ENCODE measurements at regions of chr12 and their contacts with region 1.

Region 1: DNA sequence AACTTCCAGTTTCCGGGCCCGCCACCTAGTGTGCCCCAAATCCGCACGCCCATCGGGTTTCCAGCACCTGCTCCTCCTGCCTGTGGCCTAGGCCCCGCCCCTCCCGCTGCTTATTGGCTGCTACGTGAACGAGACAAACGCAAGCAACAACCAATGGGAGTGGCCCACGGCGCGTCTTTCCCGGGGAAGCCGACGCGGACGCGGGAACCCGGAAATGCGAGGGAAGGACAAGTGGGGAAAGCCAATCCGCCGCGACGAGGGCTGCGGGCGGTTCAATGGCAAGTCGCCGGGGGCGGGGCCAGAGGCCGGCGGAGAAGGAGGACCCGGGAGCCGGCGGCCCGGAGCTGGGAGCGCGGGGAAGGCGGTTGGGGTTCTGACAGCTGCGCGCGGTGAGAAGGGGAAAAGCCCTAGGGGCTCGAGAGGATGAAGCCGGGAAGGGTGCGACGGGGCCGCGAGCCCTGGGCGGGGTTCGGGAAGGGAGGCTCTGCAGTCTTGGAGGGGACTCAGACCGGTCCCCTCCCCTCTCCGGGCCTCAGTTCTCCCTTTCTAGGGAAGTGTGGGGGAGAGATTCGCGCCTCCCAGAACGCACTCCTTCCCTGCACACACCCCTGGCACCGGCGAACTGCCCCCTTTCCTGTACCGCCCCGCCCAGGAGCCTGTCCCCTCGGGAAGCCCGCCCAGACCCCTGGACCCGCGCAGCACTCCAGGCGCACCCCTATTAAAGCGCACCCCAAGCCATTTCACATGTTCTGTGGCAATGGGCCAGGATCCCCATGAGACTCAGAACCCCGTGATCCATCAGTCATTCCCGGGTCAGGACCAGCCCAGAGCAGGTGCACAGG is at the start of gene FICD:
- DNase-seq: peak; percentile 96 to 100 (median 99)
- ATAC-seq: peak; percentile 93
- H3K4me3 ChIP-seq: peak within 1 kb of the TSS; percentile 99
- H3K4me3 Mint-ChIP-seq: peak within 1 kb of the TSS; percentile 96
- H3K27ac ChIP-seq: peak within 1 kb of the TSS; percentile 70 to 71
- H3K27ac Mint-ChIP-seq: peak within 1 kb of the TSS; percentile 87
- H3K4me1 ChIP-seq: peaks cover 34% of the 10 kb centered on the region
- H3K4me1 Mint-ChIP-seq: peaks cover 29% of the 10 kb centered on the region
- H3K27me3 ChIP-seq: no peaks in the 10 kb centered on the region
- H3K27me3 Mint-ChIP-seq: no peaks in the 10 kb centered on the region
- CTCF ChIP-seq: no peak
- total RNA-seq, gene FICD: 2.7 to 3.2 TPM

Region 2: GRCh38 chr12:107093417-107094182 is 1421.6 kb before region 1 on chr12 and contains the start of gene CRY1:
- CTCF ChIA-PET with region 1: no interaction called
- POLR2A ChIA-PET with region 1: no interaction called
- intact Hi-C with region 1: loop called in 1 of 2 experiments (anchors 5 kb)
- DNase-seq: peak; percentile 86 to 96 (median 91)
- ATAC-seq: peak; percentile 75
- H3K4me3 ChIP-seq: peak within 1 kb of the TSS; percentile 90
- H3K4me3 Mint-ChIP-seq: no peak within 1 kb of the TSS
- H3K27ac ChIP-seq: peak within 1 kb of the TSS; percentile 99
- H3K27ac Mint-ChIP-seq: no peak within 1 kb of the TSS
- H3K4me1 ChIP-seq: peaks cover 31% of the 10 kb centered on the region
- H3K4me1 Mint-ChIP-seq: peaks cover 17% of the 10 kb centered on the region
- H3K27me3 ChIP-seq: no peaks in the 10 kb centered on the region
- H3K27me3 Mint-ChIP-seq: peaks cover 10% of the 10 kb centered on the region
- CTCF ChIP-seq: no peak
- total RNA-seq, gene CRY1: 70.7 to 77.4 TPM

Region 3: GRCh38 chr12:107760809-107761501 is 754.2 kb before region 1 on chr12 and contains the start of gene PRDM4:
- CTCF ChIA-PET with region 1: no interaction called
- POLR2A ChIA-PET with region 1: no interaction called
- intact Hi-C with region 1: loop called (anchors 2 to 5 kb)
- DNase-seq: peak; percentile 75 to 98 (median 88)
- ATAC-seq: peak; percentile 91
- H3K4me3 ChIP-seq: peak within 1 kb of the TSS; percentile 78
- H3K4me3 Mint-ChIP-seq: peak within 1 kb of the TSS; percentile 96
- H3K27ac ChIP-seq: peak within 1 kb of the TSS; percentile 51 to 77
- H3K27ac Mint-ChIP-seq: peak within 1 kb of the TSS; percentile 87
- H3K4me1 ChIP-seq: peaks cover 26% of the 10 kb centered on the region
- H3K4me1 Mint-ChIP-seq: peaks cover 48% of the 10 kb centered on the region
- H3K27me3 ChIP-seq: no peaks in the 10 kb centered on the region
- H3K27me3 Mint-ChIP-seq: no peaks in the 10 kb centered on the region
- CTCF ChIP-seq: no peak
- total RNA-seq, gene PRDM4: 40.2 to 44.0 TPM

Region 4: DNA sequence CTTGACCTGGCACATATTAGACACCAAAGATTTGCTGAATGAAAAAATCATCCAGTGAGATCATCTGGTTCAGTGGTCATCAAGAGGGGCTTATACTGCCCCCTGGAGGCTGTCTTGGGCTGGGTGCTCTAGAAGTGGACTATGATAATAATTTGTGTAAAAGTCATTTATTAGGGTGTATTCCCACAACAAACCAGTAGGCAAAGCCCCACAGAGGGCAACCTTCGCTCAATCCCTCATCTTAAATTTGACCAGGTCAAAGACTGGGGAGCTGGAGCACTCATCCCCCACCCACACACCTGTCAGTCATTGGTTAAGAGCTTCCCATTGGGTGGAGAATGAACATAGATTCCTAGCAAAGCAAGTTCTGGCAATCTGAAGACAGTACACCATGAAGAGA is 20.1 kb before region 1 on chr12:
- CTCF ChIA-PET with region 1: no interaction called
- POLR2A ChIA-PET with region 1: no interaction called
- intact Hi-C with region 1: no loop called
- DNase-seq: peak in 3 of 14 experiments; percentile 35 to 37 (median 37)
- ATAC-seq: no peak
- H3K4me3 ChIP-seq: no peak overlapping the region
- H3K4me3 Mint-ChIP-seq: no peak overlapping the region
- H3K27ac ChIP-seq: no peak overlapping the region
- H3K27ac Mint-ChIP-seq: no peak overlapping the region
- H3K4me1 ChIP-seq: no peaks in the 10 kb centered on the region
- H3K4me1 Mint-ChIP-seq: no peaks in the 10 kb centered on the region
- H3K27me3 ChIP-seq: peaks cover 15 to 22% of the 10 kb centered on the region in 2 experiments
- H3K27me3 Mint-ChIP-seq: peaks cover 56% of the 10 kb centered on the region
- CTCF ChIP-seq: no peak

Region 5: GRCh38 chr12:108562348-108563135 is 47.3 kb after region 1 on chr12 and contains the start of gene ISCU:
- CTCF ChIA-PET with region 1: interaction called, 4 read pairs
- POLR2A ChIA-PET with region 1: interaction called, 12 read pairs
- intact Hi-C with region 1: loop called (anchors 2 to 5 kb)
- DNase-seq: peak; percentile 97 to 100 (median 99)
- ATAC-seq: peak; percentile 63
- H3K4me3 ChIP-seq: peak within 1 kb of the TSS; percentile 97
- H3K4me3 Mint-ChIP-seq: peak within 1 kb of the TSS; percentile 99
- H3K27ac ChIP-seq: peak within 1 kb of the TSS; percentile 92 to 94
- H3K27ac Mint-ChIP-seq: peak within 1 kb of the TSS; percentile 96
- H3K4me1 ChIP-seq: peaks cover 63% of the 10 kb centered on the region
- H3K4me1 Mint-ChIP-seq: peaks cover 74% of the 10 kb centered on the region
- H3K27me3 ChIP-seq: no peaks in the 10 kb centered on the region
- H3K27me3 Mint-ChIP-seq: no peaks in the 10 kb centered on the region
- CTCF ChIP-seq: no peak
- total RNA-seq, gene ISCU: 269 to 270 TPM

Region 6: GRCh38 chr12:108856428-108857157 is 341.4 kb after region 1 on chr12:
- CTCF ChIA-PET with region 1: no interaction called
- POLR2A ChIA-PET with region 1: no interaction called
- intact Hi-C with region 1: loop called in 1 of 2 experiments (anchors 5 kb)
- DNase-seq: peak in 13 of 14 experiments; percentile 35 to 92 (median 58)
- ATAC-seq: peak; percentile 75
- H3K4me3 ChIP-seq: peak overlapping the region; percentile 72
- H3K4me3 Mint-ChIP-seq: peak overlapping the region; percentile 95
- H3K27ac ChIP-seq: peak overlapping the region in 1 of 2 donors; percentile 22
- H3K27ac Mint-ChIP-seq: peak overlapping the region; percentile 90
- H3K4me1 ChIP-seq: peaks cover 36% of the 10 kb centered on the region
- H3K4me1 Mint-ChIP-seq: peaks cover 42% of the 10 kb centered on the region
- H3K27me3 ChIP-seq: no peaks in the 10 kb centered on the region
- H3K27me3 Mint-ChIP-seq: no peaks in the 10 kb centered on the region
- CTCF ChIP-seq: no peak

Region 7: DNA sequence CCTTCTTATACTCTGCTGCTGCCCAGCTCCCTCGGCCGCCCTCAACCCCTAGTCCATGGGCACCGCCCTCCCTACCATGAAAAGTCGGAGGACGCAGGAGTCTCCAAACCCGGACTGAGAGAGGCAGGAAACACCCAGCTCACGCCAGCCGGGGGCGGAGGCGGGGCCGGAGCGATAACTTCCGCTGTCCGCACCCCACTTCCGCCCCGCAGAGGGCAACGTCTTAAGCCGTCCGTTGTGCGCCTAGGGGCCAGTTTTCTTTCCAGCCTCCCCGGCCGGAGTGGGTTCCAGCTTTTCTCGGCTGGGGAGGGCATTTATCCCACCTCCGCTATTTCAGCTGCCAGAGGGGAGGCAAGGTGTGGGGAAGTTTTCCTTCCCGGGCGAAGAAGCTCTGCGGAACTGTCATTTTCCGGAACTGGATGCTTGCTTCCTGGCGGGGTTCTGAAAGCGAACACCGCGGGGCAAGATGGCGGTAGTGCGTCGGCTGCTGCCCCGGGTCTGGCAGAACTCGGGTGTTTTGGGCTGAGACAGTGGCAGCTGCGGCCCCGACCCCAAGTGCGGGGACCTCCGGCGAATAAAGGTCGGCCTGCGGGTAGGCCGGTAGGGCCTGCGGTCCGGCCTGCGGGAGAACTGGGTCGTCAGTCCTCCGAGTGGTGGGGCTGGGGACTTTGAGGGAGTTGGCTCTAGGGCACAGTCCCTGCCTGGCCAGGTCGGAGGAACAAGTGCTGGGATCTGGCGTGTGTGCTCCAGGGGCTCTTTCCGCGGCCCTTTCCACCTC is 962.2 kb after region 1 on chr12 and contains the starts of genes KCTD10 and UBE3B:
- CTCF ChIA-PET with region 1: no interaction called
- POLR2A ChIA-PET with region 1: no interaction called
- intact Hi-C with region 1: loop called in 1 of 2 experiments (anchors 10 kb)
- DNase-seq: peak; percentile 74 to 93 (median 82)
- ATAC-seq: peak; percentile 91
- H3K4me3 ChIP-seq: peak within 1 kb of the TSS; percentile 90
- H3K4me3 Mint-ChIP-seq: peak within 1 kb of the TSS; percentile 98
- H3K27ac ChIP-seq: peak within 1 kb of the TSS; percentile 73 to 87
- H3K27ac Mint-ChIP-seq: peak within 1 kb of the TSS; percentile 92
- H3K4me1 ChIP-seq: peaks cover 30% of the 10 kb centered on the region
- H3K4me1 Mint-ChIP-seq: peaks cover 50% of the 10 kb centered on the region
- H3K27me3 ChIP-seq: no peaks in the 10 kb centered on the region
- H3K27me3 Mint-ChIP-seq: no peaks in the 10 kb centered on the region
- CTCF ChIP-seq: no peak
- total RNA-seq, gene KCTD10: 24.2 to 26.1 TPM
- total RNA-seq, gene UBE3B: 17.2 to 19.9 TPM

Measured in CD4-positive, alpha-beta T cell (primary cell).